HEK293 (cell line): ENCODE measurements at regions of chr1 and their contacts with region 1.

Region 1: DNA sequence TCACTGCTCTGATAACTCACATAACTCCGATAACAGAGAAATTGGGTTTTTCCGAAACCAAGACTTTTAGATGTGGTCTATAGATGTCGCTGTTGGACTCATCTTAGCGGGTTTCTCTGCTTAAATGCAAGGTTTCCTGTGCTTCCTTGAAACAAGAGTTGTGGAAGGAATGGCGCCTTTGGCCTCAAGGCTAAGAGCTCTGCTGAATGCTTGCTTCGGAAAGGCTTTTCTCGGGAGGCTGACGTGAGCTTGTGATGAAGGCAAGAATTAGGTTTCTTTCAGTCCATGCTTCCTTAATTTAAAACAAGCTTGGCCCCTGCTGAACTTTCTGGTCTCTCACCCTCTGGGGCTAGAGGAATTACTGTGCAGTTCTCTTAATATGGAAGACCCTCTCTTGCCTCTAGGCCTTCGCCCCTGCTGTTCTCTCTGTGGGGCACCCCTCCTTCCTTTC is 113.5 kb downstream of the MAP3K21 start:
- H3K4me3 ChIP-seq: no peak overlapping the region
- H3K27ac ChIP-seq: no peak overlapping the region
- H3K4me1 ChIP-seq: no peaks in the 10 kb centered on the region
- CTCF ChIP-seq: peak; percentile 87

Region 2: GRCh38 chr1:233394860-233395717 is 45.9 kb before region 1 on chr1:
- CTCF ChIA-PET with region 1: interaction called, 14 read pairs
- POLR2A ChIA-PET with region 1: no interaction called
- H3K4me3 ChIP-seq: no peak overlapping the region
- H3K27ac ChIP-seq: no peak overlapping the region
- H3K4me1 ChIP-seq: no peaks in the 10 kb centered on the region
- CTCF ChIP-seq: peak; percentile 80

Region 3: GRCh38 chr1:233452724-233453123 is 11.7 kb after region 1 on chr1:
- CTCF ChIA-PET with region 1: interaction called, 26 read pairs
- POLR2A ChIA-PET with region 1: interaction called, 3 read pairs
- H3K4me3 ChIP-seq: no peak overlapping the region
- H3K27ac ChIP-seq: no peak overlapping the region
- H3K4me1 ChIP-seq: no peaks in the 10 kb centered on the region
- CTCF ChIP-seq: no peak

Region 4: DNA sequence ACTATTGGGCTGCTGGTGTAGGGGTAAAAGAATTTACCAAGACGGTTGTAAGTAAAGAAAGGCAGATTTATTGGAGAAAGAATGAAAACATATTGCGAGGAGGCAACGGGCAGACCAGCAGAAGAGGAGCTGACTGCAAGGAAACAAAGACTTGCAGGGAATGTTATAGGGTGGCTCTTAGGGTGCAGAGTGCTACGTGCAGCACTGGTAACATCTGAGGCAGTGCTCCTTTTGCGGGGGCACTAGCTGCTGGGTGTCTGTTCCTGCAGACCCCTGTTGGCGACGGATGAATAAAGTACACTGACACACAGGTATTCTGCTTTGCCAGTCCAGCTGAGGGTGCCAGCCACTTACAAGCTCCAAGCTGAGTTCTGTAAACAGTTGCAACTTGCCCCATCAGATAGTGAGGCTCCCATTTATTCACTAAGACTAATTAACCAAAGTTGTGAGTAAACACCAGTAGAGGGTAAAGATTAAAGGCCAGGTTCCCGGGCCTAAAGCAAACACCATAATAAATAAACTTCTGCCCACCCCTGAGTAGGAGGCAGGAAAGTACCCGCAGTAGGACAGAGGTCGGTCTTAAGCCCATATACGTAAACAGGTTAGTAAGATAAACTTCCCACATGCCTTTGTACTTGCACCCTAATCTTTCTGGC is 32.7 kb after region 1 on chr1:
- CTCF ChIA-PET with region 1: interaction called, 10 read pairs
- POLR2A ChIA-PET with region 1: no interaction called
- H3K4me3 ChIP-seq: no peak overlapping the region
- H3K27ac ChIP-seq: no peak overlapping the region
- H3K4me1 ChIP-seq: no peaks in the 10 kb centered on the region
- CTCF ChIP-seq: no peak

Region 5: DNA sequence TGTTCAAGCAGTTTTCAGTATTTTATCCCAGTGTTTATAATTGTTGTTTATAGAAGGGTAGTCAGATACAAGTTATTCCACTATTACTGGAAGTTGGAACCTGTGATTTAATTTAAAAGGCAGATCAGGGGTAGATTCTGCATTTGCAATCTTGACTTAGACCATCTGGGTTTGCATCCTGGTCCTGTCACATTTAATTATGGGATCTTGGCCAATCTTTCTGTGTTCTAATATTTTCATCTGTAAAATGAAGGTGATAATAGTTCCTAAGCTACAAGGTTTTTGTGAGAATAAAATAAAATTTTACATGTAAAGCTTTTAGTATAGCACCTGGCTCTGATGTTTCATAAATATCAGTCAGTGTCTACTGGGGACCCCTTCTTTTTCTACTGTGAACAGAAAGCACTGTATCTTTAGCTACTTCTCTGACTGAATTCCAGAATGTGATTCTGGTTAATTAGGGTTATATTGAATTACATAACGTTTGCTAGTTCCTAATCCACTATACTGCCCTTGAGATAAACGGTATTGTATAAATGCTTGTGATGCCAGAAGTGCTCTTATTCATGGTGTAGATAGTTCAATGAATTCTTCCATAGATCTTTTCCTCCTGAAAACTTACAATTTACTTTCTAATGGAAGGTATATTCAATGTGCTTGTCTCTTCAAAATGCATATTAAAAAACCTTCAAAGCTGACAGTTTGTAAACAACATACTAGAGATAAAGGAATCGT is 304.0 kb after region 1 on chr1:
- CTCF ChIA-PET with region 1: interaction called, 10 read pairs
- POLR2A ChIA-PET with region 1: no interaction called
- H3K4me3 ChIP-seq: no peak overlapping the region
- H3K27ac ChIP-seq: no peak overlapping the region
- H3K4me1 ChIP-seq: no peaks in the 10 kb centered on the region
- CTCF ChIP-seq: no peak

Region 6: GRCh38 chr1:233796146-233796783 is 355.3 kb after region 1 on chr1:
- CTCF ChIA-PET with region 1: interaction called, 43 read pairs
- POLR2A ChIA-PET with region 1: no interaction called
- H3K4me3 ChIP-seq: no peak overlapping the region
- H3K27ac ChIP-seq: no peak overlapping the region
- H3K4me1 ChIP-seq: no peaks in the 10 kb centered on the region
- CTCF ChIP-seq: no peak

Region 7: GRCh38 chr1:234114648-234115307 is 673.8 kb after region 1 on chr1:
- CTCF ChIA-PET with region 1: interaction called, 23 read pairs
- POLR2A ChIA-PET with region 1: no interaction called
- H3K4me3 ChIP-seq: no peak overlapping the region
- H3K27ac ChIP-seq: no peak overlapping the region
- H3K4me1 ChIP-seq: no peaks in the 10 kb centered on the region
- CTCF ChIP-seq: peak; percentile 80